ENCODE measurements at regions of chr12 and their contacts with region 1.

Region 1: GRCh38 chr12:95532851-95533250 is 18.4 kb downstream of the USP44 start:
- DNase-seq: no peak

Region 2: GRCh38 chr12:95117178-95117599 is 415.7 kb before region 1 on chr12:
- intact Hi-C with region 1: loop called (anchors 1 kb)
- DNase-seq: peak in 5 of 10 donors; percentile 26 to 52 (median 32)

Region 3: DNA sequence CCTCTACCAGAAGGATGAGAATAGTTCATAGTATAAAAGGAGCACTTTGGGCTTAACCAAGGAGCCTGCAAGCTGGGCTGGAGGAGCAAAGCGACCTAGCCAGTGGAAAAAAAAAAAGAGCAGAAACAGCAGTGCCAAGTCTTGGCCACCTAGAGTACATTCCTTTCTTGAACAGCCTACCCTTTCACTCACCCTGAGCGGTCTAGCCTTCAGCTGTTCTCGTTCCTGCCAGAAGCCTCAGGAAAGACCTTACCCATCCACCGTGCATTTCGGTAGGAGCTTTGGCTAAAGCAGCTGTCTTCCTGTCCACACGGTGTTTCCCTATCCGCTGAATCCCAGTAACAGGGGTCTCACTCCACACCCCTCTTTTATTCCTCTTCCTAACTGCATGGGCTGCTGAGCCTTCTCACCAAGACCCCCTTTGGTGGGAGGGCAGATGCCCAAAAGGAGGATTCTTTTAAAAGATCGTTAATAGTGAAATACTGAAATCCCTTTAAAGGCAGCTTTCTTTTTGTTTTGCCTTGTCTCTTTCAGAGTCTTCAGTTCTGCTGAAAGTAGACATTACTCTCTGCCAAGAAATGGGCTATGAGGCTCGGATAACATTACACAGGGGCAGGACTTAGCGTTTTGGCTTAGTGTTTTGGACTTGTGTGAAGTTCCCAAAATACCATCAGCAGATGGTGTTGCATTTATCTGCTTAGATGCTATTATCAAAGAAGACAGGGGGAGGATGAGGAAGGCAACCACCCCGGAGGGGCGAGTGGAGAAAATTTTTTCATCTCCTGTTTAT is 147.4 kb before region 1 on chr12:
- intact Hi-C with region 1: no loop called
- DNase-seq: peak in 2 of 10 donors; percentile 9 to 11

Measured in posterior cingulate gyrus (tissue), 11 donors.